ENCODE measurements at regions of chr18 and their contacts with region 1.

Region 1: DNA sequence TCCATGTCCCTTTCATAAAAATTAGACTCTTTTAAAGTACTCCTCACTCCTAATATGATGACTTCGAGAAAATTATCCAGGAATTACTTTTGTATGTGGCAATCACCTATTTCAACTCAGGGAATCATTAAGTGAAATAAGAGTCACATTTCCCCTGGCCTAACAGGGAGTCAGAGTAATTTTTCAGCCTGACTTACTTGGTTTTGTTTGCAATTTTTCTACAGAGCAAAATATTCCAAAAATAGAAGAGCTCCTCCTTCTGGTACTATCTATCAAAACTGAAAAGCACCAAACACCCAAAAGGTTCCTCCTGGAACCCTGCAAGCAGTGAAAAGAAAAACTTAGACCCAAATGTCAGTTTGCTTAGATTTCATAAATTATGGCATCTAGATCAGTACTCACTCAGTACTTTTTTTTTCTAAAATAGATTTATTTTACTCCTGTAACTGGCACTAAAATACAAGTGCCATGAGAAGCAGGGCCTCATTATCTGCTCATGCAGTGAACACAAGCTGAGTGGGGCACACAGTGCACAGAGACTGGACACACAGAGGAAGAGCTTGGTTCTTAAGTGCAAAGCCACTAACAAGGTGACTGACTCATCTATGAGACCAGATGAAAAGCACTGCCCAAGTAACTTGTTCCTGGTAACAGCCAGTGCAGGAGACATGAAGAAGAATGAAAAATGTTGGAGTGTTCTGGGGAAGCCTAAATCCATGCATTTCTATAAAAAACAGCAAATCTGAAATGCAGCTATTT is 28.7 kb downstream of the ACAA2 start:
- DNase-seq: no peak
- H3K4me3 ChIP-seq: no peak overlapping the region
- H3K27ac ChIP-seq: peak overlapping the region in 2 of 3 donors; percentile 27 to 67
- H3K4me1 ChIP-seq: peaks cover 5 to 10% of the 10 kb centered on the region in 2 donors
- H3K27me3 ChIP-seq: no peaks in the 10 kb centered on the region
- CTCF ChIP-seq: peak in 3 of 6 experiments; percentile 37 to 46 (median 43)
- POLR2A ChIP-seq: no peak

Region 2: GRCh38 chr18:49510393-49511115 is 274.1 kb before region 1 on chr18:
- intact Hi-C with region 1: loop called (anchors 10 kb)
- DNase-seq: peak; percentile 43 to 62
- H3K4me3 ChIP-seq: no peak overlapping the region
- H3K27ac ChIP-seq: no peak overlapping the region
- H3K4me1 ChIP-seq: no peaks in the 10 kb centered on the region
- H3K27me3 ChIP-seq: no peaks in the 10 kb centered on the region
- CTCF ChIP-seq: peak; percentile 56 to 87 (median 76)
- POLR2A ChIP-seq: no peak

Region 3: DNA sequence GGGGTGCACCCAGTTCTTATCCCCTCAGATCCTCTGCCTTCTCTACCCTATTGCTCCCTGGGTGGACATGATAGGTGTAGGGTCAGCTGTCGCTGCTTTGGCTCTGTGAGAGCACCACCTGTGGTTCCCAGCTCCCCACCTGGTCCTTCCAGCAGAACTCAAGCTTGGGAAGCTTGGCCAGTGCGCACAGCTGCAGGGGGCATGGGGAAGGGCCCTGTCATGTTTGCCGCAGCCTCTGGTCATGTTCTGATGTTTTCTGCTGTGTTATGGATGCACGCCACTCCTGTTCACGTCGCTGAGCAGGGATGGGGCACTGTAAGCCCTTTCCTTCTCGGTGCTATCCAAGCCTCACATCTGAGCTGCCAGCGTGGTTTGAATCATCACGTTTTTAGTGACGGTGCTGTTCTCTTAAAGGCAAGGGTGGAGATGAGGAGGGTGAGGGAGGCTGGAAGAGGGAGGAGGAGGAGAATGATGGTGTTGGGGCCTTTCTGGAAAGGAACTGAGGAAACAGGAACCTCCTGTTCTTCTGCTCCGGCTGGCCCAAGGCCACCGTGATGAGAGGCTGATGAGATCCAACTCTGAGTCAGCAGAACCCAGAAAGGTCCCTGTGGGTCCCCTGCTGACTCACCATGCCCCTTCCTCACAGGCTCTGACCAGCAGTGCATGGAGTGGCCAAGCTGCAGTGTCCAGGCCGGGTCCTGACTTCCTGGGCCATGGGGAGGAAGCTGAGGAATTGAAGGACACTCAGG is 144.8 kb before region 1 on chr18:
- intact Hi-C with region 1: no loop called
- DNase-seq: peak in 1 of 2 donors; percentile 40
- H3K4me3 ChIP-seq: no peak overlapping the region
- H3K27ac ChIP-seq: no peak overlapping the region
- H3K4me1 ChIP-seq: peaks cover 3 to 8% of the 10 kb centered on the region in 2 donors
- H3K27me3 ChIP-seq: no peaks in the 10 kb centered on the region
- CTCF ChIP-seq: no peak
- POLR2A ChIP-seq: no peak

Measured in thyroid gland (tissue), 4 donors.